ENCODE measurements at regions of chr6 and their contacts with region 1.

Region 1: GRCh38 chr6:125082908-125083683 is 70.5 kb upstream of the TPD52L1 start:
- DNase-seq: no peak
- H3K4me3 ChIP-seq: no peak overlapping the region
- H3K27ac ChIP-seq: no peak overlapping the region
- H3K27me3 ChIP-seq: no peaks in the 10 kb centered on the region
- CTCF ChIP-seq: no peak

Region 2: DNA sequence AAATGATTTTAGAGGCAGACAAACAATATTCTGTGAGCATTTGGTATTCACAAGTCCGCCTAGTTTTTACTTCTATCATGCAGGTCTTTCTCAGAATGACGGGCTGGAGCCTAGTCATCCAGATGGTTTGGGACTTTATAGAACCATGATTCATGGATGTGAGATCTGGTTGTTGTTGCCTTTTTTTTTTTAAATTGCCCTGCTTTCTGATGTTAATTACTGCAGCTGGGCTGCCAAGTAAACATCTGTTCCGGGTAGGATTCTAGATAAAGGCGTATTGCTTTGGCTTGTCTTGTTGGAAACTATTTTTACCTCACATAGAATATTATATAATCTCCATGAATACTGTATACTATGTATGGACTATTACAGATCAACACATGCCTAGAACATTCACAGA is 62.7 kb before region 1 on chr6:
- CTCF ChIA-PET with region 1: no interaction called
- POLR2A ChIA-PET with region 1: no interaction called
- DNase-seq: no peak
- H3K4me3 ChIP-seq: no peak overlapping the region
- H3K27ac ChIP-seq: no peak overlapping the region
- H3K27me3 ChIP-seq: no peaks in the 10 kb centered on the region
- CTCF ChIP-seq: no peak

Region 3: GRCh38 chr6:125415921-125416320 is 332.8 kb after region 1 on chr6:
- CTCF ChIA-PET with region 1: no interaction called
- POLR2A ChIA-PET with region 1: interaction called, 12 read pairs
- DNase-seq: no peak
- H3K4me3 ChIP-seq: no peak overlapping the region
- H3K27ac ChIP-seq: no peak overlapping the region
- H3K27me3 ChIP-seq: no peaks in the 10 kb centered on the region
- CTCF ChIP-seq: no peak

Measured in AG04450 (cell line).